Esophagus muscularis mucosa (tissue), 4 donors: ENCODE measurements at regions of chr3 and their contacts with region 1.

Region 1: GRCh38 chr3:156826144-156826895 is at the start of gene LEKR1:
- DNase-seq: no peak
- H3K4me3 ChIP-seq: peak within 1 kb of the TSS; percentile 67 to 79 (median 74)
- H3K27ac ChIP-seq: peak within 1 kb of the TSS; percentile 82 to 91 (median 87)
- H3K4me1 ChIP-seq: peaks cover 4 to 14% (median 9%) of the 10 kb centered on the region in 4 donors
- H3K27me3 ChIP-seq: no peaks in the 10 kb centered on the region
- CTCF ChIP-seq: no peak
- EP300 ChIP-seq: peak; percentile 68
- POLR2A ChIP-seq: peak; percentile 28
- total RNA-seq, gene LEKR1: 0.11 to 1.2 (median 0.33) TPM in 3 of 4 donors, not detected in the other

Region 2: DNA sequence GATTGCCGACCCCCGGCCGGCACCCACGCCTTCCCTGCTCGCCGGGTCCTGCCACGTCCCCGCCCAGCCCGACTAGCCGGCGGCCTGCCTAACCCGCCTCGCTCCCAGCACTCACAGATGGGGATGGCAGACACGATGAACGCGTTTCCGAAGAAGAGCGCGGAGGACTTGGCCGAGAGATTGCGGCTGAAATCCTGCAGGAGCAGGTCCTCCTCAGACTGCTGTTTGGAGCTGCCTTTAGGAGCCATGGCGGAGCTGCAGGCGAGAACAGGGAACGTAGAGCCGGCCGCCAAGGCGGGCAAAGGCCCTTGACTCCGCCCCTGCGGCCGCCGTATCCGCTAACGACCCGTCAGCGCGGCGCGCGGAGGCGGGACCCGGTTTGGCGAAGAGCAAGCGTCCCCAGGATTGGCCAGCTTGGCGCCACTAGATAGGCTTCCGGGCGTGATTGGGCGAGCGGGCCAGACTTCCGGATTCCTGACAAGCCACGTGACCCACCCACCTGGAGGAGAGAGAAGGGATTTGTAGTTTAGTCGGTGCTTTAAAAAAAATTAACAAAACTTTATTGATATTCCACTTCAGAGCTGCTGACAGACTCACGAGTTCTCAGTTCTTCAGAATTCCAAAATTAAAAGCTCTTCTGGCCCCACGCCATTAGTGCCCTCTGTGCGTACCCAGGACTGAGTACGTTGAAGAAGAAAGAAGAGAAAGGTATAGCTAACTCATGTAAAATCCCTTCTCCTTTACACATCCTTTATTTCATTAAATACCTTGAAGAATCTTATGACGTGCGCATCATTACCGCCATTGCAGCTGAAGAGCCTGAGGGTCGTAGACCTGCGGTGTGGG is 271.3 kb before region 1 on chr3 and contains the start of gene SSR3:
- intact Hi-C with region 1: loop called (anchors 10 kb)
- DNase-seq: peak; percentile 100
- H3K4me3 ChIP-seq: peak within 1 kb of the TSS; percentile 75 to 95 (median 79)
- H3K27ac ChIP-seq: peak within 1 kb of the TSS; percentile 86 to 88 (median 88)
- H3K4me1 ChIP-seq: peaks cover 24 to 46% (median 43%) of the 10 kb centered on the region in 4 donors
- H3K27me3 ChIP-seq: no peaks in the 10 kb centered on the region
- CTCF ChIP-seq: peak in 2 of 3 experiments; percentile 35 to 57
- EP300 ChIP-seq: no peak
- POLR2A ChIP-seq: peak; percentile 75
- total RNA-seq, gene SSR3: 170 to 211 (median 207) TPM

Region 3: DNA sequence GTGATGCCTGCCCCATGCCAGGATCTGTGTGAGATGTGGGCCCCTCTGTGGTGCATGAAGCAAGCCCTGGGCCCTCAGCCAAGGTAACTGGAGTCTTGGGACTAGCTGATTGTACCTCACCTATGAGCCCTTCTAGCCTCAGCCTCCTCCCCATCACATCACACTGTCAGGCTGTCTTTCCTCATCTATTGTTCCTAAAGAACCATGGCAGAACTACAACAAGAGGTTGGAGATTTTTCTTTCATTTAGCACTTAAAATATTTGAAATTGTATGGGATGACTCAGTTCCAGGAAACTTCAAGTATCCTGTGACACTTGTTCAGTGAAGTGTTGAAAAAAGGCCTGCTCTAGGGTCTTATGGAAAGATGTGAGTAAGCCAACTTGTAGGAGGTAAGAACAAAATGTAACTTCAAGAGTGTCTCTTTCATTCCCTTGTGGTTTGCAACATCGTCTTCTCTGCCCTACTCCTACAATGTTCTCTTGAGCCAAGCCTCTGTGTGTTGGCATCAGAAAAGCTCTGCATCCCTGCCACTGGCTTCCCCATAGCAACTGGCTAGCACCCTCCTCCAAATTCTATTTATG is 210.6 kb before region 1 on chr3:
- intact Hi-C with region 1: no loop called
- DNase-seq: no peak
- H3K4me3 ChIP-seq: no peak overlapping the region
- H3K27ac ChIP-seq: peak overlapping the region in 3 of 4 donors; percentile 16 to 35 (median 23)
- H3K4me1 ChIP-seq: peaks cover 0 to 11% (median 0%) of the 10 kb centered on the region in 4 donors
- H3K27me3 ChIP-seq: no peaks in the 10 kb centered on the region
- CTCF ChIP-seq: no peak
- EP300 ChIP-seq: no peak
- POLR2A ChIP-seq: no peak

Region 4: DNA sequence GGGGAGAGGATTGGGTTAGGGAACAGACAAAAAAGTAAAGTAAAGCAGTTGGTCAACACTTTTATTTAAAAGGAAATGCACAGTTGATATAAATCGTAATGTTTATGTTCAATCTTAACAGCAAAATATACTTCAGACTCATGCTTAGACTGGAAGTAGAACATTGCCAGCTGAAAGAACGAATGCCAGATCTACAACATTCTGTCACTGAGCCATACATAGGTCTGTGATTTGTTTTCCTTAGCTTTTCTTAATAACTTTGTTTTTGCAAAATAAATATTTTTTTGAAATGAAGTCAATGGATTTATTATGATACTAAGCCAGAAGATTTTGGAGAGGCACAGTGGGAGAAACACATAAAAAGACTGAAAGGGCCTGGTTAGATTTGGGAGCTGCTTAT is 61.9 kb after region 1 on chr3:
- intact Hi-C with region 1: no loop called
- DNase-seq: no peak
- H3K4me3 ChIP-seq: no peak overlapping the region
- H3K27ac ChIP-seq: no peak overlapping the region
- H3K4me1 ChIP-seq: no peaks in the 10 kb centered on the region
- H3K27me3 ChIP-seq: no peaks in the 10 kb centered on the region
- CTCF ChIP-seq: no peak
- EP300 ChIP-seq: no peak
- POLR2A ChIP-seq: no peak

Region 5: GRCh38 chr3:156918746-156919145 is 92.4 kb after region 1 on chr3:
- intact Hi-C with region 1: no loop called
- DNase-seq: no peak
- H3K4me3 ChIP-seq: no peak overlapping the region
- H3K27ac ChIP-seq: no peak overlapping the region
- H3K4me1 ChIP-seq: no peaks in the 10 kb centered on the region
- H3K27me3 ChIP-seq: no peaks in the 10 kb centered on the region
- CTCF ChIP-seq: no peak
- EP300 ChIP-seq: no peak
- POLR2A ChIP-seq: no peak

Region 6: DNA sequence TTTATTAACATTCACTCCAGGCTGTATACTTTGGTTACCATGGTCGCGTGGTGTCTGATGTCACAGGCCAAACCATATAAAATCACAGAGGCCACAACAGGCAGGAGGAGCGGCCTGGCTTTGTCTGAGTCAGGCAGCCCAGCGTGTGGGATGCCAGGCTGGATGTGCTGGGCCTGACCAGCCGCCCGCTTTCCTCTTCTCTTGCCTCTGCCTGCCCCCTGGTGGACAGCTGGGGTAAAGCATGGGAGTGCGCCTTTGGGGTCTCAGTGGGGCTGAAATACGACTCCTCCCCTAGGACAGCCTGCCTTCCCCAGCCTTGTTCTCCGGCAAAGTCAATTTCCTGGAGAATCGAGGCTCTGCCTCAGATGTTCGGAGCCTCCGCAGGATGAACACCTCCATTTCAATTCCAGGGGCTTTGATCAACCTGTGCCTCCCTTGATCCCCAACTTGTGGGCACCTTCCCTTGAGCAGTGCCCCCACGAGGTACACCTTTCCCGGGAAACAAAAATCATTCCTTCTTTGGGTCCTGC is 255.4 kb after region 1 on chr3:
- intact Hi-C with region 1: loop called (anchors 5 kb)
- DNase-seq: peak; percentile 95
- H3K4me3 ChIP-seq: peak overlapping the region in 1 of 4 donors; percentile 4
- H3K27ac ChIP-seq: peak overlapping the region in 3 of 4 donors; percentile 8 to 42 (median 36)
- H3K4me1 ChIP-seq: peaks cover 8 to 29% (median 24%) of the 10 kb centered on the region in 4 donors
- H3K27me3 ChIP-seq: no peaks in the 10 kb centered on the region
- CTCF ChIP-seq: peak in 2 of 3 experiments; percentile 96 to 97
- EP300 ChIP-seq: no peak
- POLR2A ChIP-seq: no peak